Mammary epithelial cell (primary cell): ENCODE measurements at regions of chr4 and their contacts with region 1.

Region 1: GRCh38 chr4:182925298-182925738 is 8.1 kb upstream of the DCTD start:
- DNase-seq: peak; percentile 64
- H3K4me3 ChIP-seq: no peak overlapping the region
- H3K27ac ChIP-seq: no peak overlapping the region
- H3K4me1 ChIP-seq: no peaks in the 10 kb centered on the region
- H3K27me3 ChIP-seq: no peaks in the 10 kb centered on the region
- CTCF ChIP-seq: peak; percentile 41 to 72

Region 2: GRCh38 chr4:181143250-181143854 is 1782.0 kb before region 1 on chr4:
- CTCF ChIA-PET with region 1: no interaction called
- dilution Hi-C with region 1: no loop called
- in situ Hi-C with region 1: no loop called
- intact Hi-C with region 1: loop called (anchors 2 kb)
- DNase-seq: peak; percentile 50
- H3K4me3 ChIP-seq: no peak overlapping the region
- H3K27ac ChIP-seq: no peak overlapping the region
- H3K4me1 ChIP-seq: no peaks in the 10 kb centered on the region
- H3K27me3 ChIP-seq: no peaks in the 10 kb centered on the region
- CTCF ChIP-seq: peak; percentile 75 to 81

Region 3: DNA sequence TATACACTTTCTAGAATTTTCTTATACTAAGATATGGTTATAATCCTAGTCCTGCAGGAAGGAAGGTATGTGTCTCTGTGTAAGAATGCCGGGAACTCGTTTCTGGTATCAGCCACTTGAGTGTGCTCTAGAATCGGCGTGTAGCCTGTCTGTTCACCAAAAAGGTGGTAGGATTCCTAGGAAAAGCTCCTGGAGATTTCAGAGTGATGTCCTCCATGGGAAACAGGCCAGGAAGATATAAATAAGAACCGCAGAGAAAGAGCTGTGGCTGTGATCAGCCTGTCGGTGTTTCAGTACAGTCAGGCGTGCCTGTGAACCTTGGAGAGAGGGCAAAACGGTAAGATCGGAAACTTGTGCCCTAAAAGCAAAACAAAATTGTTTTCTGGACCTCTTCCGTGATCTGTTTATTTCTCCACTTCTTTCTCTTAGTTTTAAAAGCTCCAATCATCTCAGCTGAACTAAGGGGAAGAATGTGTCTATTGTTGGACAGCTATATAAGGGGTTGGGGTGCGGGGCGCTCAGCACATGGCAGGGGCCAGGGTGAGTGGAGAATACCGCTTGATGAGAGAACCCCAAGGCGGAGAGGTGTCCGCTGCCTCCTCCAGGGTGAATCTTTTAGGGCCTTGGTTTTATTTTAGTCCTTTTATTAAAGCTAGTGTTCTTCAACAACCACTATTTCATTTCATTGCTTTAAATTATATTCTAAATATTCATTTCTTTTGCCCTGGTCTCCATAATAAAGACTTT is 985.9 kb before region 1 on chr4:
- CTCF ChIA-PET with region 1: no interaction called
- dilution Hi-C with region 1: no loop called
- in situ Hi-C with region 1: no loop called
- intact Hi-C with region 1: loop called (anchors 5 kb)
- DNase-seq: peak; percentile 59
- H3K4me3 ChIP-seq: peak overlapping the region in 1 of 3 experiments; percentile 26
- H3K27ac ChIP-seq: peak overlapping the region; percentile 25
- H3K4me1 ChIP-seq: peaks cover 4% of the 10 kb centered on the region
- H3K27me3 ChIP-seq: no peaks in the 10 kb centered on the region
- CTCF ChIP-seq: peak; percentile 46 to 63

Region 4: DNA sequence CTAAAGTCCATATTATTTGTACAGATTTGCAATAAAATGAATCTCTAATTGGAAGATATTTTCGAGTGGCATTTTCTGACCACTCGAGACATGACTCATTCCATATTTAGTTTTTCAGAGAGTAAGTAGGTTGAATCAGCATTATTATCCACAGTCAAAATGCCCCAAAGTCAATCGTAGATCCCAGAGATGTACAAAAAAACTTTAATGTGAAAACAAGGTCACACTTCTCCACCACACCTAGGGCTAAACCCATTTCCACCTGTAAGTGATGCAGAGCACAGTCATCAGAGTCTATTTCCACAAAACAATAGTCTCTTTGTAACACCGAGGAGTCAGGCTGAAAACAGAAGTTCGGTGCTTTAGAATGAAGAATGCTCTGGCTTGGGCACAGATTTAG is 799.2 kb before region 1 on chr4:
- CTCF ChIA-PET with region 1: no interaction called
- dilution Hi-C with region 1: no loop called
- in situ Hi-C with region 1: no loop called
- intact Hi-C with region 1: loop called (anchors 10 kb)
- DNase-seq: peak; percentile 95
- H3K4me3 ChIP-seq: peak overlapping the region; percentile 0 to 34 (median 30)
- H3K27ac ChIP-seq: peak overlapping the region; percentile 100
- H3K4me1 ChIP-seq: peaks cover 35% of the 10 kb centered on the region
- H3K27me3 ChIP-seq: no peaks in the 10 kb centered on the region
- CTCF ChIP-seq: no peak

Region 5: GRCh38 chr4:182478475-182478874 is 446.8 kb before region 1 on chr4:
- CTCF ChIA-PET with region 1: no interaction called
- dilution Hi-C with region 1: no loop called
- in situ Hi-C with region 1: no loop called
- intact Hi-C with region 1: loop called (anchors 1 kb)
- DNase-seq: peak; percentile 20
- H3K4me3 ChIP-seq: no peak overlapping the region
- H3K27ac ChIP-seq: no peak overlapping the region
- H3K4me1 ChIP-seq: no peaks in the 10 kb centered on the region
- H3K27me3 ChIP-seq: no peaks in the 10 kb centered on the region
- CTCF ChIP-seq: peak; percentile 54 to 57

Region 6: GRCh38 chr4:182835006-182835740 is 90.1 kb before region 1 on chr4:
- CTCF ChIA-PET with region 1: no interaction called
- dilution Hi-C with region 1: no loop called
- in situ Hi-C with region 1: no loop called
- intact Hi-C with region 1: no loop called
- DNase-seq: no peak
- H3K4me3 ChIP-seq: no peak overlapping the region
- H3K27ac ChIP-seq: no peak overlapping the region
- H3K4me1 ChIP-seq: no peaks in the 10 kb centered on the region
- H3K27me3 ChIP-seq: no peaks in the 10 kb centered on the region
- CTCF ChIP-seq: no peak

Region 7: DNA sequence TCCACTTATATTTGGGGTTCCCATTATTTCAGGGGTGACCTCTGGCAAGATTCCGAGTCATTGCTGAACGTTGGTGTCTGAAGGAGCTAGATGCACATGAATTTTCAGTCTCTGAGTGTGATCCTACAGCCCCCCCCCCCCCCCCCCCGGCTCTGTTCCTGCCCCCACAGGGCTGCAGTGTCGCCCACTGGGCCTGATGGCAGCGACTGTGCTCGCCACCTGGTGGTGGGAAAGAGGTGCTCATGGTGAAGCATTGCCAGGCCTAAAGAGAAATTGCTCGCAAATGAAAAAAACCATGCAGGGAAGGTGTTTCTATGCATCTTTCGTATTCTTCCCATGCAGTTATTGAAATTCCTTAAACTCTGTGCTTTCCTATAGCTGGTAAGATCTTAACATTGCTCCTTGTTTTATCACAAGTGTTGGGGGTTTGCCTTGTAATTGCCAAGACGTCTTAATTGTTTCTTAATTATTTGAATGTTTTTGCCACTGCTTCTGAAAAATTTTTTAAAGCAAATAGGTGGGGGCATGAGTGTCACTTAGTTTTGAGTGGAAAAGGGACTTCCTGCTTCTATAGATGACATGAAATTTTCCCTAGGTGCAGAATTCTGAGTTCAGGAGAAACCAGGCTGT is 331.6 kb after region 1 on chr4:
- CTCF ChIA-PET with region 1: no interaction called
- dilution Hi-C with region 1: loop called (anchors 10 kb)
- in situ Hi-C with region 1: loop called in 1 of 2 experiments (anchors 10 kb)
- intact Hi-C with region 1: no loop called
- DNase-seq: peak; percentile 20
- H3K4me3 ChIP-seq: no peak overlapping the region
- H3K27ac ChIP-seq: no peak overlapping the region
- H3K4me1 ChIP-seq: no peaks in the 10 kb centered on the region
- H3K27me3 ChIP-seq: no peaks in the 10 kb centered on the region
- CTCF ChIP-seq: peak; percentile 82 to 85

Region 8: DNA sequence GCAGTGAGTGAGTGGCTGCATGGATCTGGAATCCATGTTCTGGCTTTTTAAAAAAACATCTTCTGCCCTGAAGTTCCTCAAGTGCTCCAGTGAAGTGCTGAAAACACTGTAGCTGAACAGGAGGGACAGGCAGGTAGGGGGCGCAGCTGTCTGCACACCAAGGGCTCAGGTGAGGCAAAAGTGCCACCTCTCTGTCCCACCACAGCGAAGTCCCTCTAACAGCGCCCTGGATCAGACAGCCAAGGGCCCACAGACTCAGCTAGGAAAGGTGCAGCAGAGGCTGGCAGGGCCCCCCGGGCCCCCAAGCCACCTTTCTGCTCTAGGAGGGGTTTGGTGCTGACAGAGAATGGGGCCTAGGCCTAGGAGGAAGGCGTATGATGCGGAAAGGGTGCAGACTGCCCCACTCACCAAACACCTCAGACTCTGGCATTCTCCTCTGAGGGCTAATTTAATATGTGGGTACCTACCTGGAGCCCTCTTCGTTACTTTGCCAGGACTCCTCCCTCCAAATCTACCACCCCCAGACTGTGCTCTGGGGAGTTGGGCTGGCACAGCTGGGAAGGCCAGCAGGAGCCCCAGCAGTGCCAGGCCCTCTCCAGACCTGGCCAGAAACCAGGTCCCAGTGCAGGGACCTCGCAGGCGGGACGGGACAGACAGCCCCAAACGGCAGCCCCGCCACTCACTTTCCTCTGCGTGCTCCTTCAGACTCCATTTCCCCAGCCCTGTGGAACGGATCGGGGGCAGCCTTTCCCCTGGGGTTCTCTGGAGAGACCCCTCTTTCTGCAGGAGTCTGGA is 1218.6 kb after region 1 on chr4:
- CTCF ChIA-PET with region 1: no interaction called
- dilution Hi-C with region 1: no loop called
- in situ Hi-C with region 1: no loop called
- intact Hi-C with region 1: no loop called
- DNase-seq: no peak
- H3K4me3 ChIP-seq: no peak overlapping the region
- H3K27ac ChIP-seq: no peak overlapping the region
- H3K4me1 ChIP-seq: no peaks in the 10 kb centered on the region
- H3K27me3 ChIP-seq: no peaks in the 10 kb centered on the region
- CTCF ChIP-seq: no peak